Caco-2 (cell line): ENCODE measurements at regions of chr11 and their contacts with region 1.

Region 1: DNA sequence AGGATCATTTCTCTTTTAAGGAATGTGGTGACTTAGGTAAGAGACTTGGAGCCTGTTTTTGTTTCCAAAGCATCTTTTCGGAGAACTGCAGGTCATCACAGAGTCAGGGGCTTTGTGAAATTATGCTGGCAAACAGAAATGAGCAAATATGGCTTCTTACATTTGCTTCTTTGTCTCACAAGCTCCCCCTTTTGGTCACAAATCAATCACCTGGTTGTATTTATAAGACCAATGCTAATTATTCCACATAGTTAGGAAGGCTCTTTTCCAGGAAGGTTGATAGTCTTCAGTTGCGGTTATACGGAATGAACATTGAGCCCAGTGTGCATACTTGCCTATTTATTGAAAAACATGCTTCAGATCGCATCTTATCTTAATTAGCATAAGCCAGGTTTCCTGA is 34.6 kb upstream of the CEP126 start:
- DNase-seq: peak; percentile 42 to 77
- H3K4me3 ChIP-seq: no peak overlapping the region
- H3K4me3 Mint-ChIP-seq: no peak overlapping the region
- H3K27ac Mint-ChIP-seq: no peak overlapping the region
- H3K4me1 ChIP-seq: peaks cover 8% of the 10 kb centered on the region
- H3K4me1 Mint-ChIP-seq: peaks cover 11% of the 10 kb centered on the region
- H3K27me3 ChIP-seq: no peaks in the 10 kb centered on the region
- H3K27me3 Mint-ChIP-seq: no peaks in the 10 kb centered on the region
- CTCF ChIP-seq: peak; percentile 66 to 90

Region 2: DNA sequence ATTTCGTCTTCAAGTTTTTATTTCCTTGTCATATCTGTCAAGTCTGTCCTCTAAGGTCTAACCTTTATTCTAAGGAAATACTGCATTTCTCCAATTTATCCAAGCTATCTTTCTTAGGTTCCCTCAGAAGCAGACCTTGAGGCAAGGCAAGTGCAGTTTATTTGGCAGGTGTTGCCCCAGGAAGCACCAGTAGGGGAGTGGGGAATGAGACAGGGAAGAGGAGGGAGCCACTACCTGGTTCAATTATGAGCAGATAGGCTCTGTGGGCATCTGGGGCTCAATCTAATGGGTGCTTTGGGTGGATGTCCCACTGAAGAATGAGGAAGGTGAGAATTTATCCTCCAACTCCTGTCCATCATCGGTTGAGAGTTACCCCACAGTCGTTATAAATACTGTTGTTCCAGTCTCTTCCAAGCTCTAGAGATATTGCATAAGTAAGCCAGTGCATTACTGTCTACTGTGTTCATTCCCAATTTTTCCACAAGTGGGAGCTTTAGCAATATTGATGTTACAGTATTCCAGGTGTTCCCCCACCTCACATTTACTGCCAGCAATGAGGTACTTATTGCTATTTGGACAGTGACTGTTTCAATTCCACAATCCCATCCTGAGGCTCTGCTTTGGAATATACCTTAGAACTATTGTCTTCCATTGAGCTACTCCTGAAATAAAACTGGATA is 120.3 kb before region 1 on chr11:
- CTCF ChIA-PET with region 1: no interaction called
- POLR2A ChIA-PET with region 1: no interaction called
- intact Hi-C with region 1: loop called (anchors 1 kb)
- DNase-seq: peak in 1 of 2 experiments; percentile 64
- H3K4me3 ChIP-seq: no peak overlapping the region
- H3K4me3 Mint-ChIP-seq: no peak overlapping the region
- H3K27ac Mint-ChIP-seq: no peak overlapping the region
- H3K4me1 ChIP-seq: no peaks in the 10 kb centered on the region
- H3K4me1 Mint-ChIP-seq: no peaks in the 10 kb centered on the region
- H3K27me3 ChIP-seq: no peaks in the 10 kb centered on the region
- H3K27me3 Mint-ChIP-seq: no peaks in the 10 kb centered on the region
- CTCF ChIP-seq: peak; percentile 51 to 76

Region 3: GRCh38 chr11:101860696-101861427 is 19.4 kb before region 1 on chr11:
- CTCF ChIA-PET with region 1: interaction called, 50 read pairs
- POLR2A ChIA-PET with region 1: no interaction called
- intact Hi-C with region 1: loop called (anchors 1 kb)
- DNase-seq: peak; percentile 73 to 79
- H3K4me3 ChIP-seq: no peak overlapping the region
- H3K4me3 Mint-ChIP-seq: no peak overlapping the region
- H3K27ac Mint-ChIP-seq: peak overlapping the region; percentile 71
- H3K4me1 ChIP-seq: peaks cover 28% of the 10 kb centered on the region
- H3K4me1 Mint-ChIP-seq: peaks cover 25% of the 10 kb centered on the region
- H3K27me3 ChIP-seq: no peaks in the 10 kb centered on the region
- H3K27me3 Mint-ChIP-seq: no peaks in the 10 kb centered on the region
- CTCF ChIP-seq: peak; percentile 89 to 95

Region 4: GRCh38 chr11:102287964-102288724 is 407.9 kb after region 1 on chr11:
- CTCF ChIA-PET with region 1: no interaction called
- POLR2A ChIA-PET with region 1: no interaction called
- intact Hi-C with region 1: no loop called
- DNase-seq: peak; percentile 66 to 78
- H3K4me3 ChIP-seq: no peak overlapping the region
- H3K4me3 Mint-ChIP-seq: peak overlapping the region; percentile 1
- H3K27ac Mint-ChIP-seq: no peak overlapping the region
- H3K4me1 ChIP-seq: peaks cover 12% of the 10 kb centered on the region
- H3K4me1 Mint-ChIP-seq: peaks cover 7% of the 10 kb centered on the region
- H3K27me3 ChIP-seq: no peaks in the 10 kb centered on the region
- H3K27me3 Mint-ChIP-seq: no peaks in the 10 kb centered on the region
- CTCF ChIP-seq: peak; percentile 84